HepG2 (cell line): ENCODE measurements at regions of chr14 and their contacts with region 1.

Region 1: GRCh38 chr14:24978862-24979724 is 70.9 kb downstream of the STXBP6 start:
- DNase-seq: peak; percentile 93
- ATAC-seq: peak; percentile 89
- H3K4me3 ChIP-seq: no peak overlapping the region
- H3K27ac ChIP-seq: peak overlapping the region; percentile 31
- H3K4me1 ChIP-seq: peaks cover 58% of the 10 kb centered on the region
- H3K27me3 ChIP-seq: no peaks in the 10 kb centered on the region
- CTCF ChIP-seq: peak; percentile 19; the same call in 1 of the 2 replicates
- EP300 ChIP-seq: peak in 1 of 2 experiments; percentile 86; a peak in 2 of 4 replicates
- POLR2A ChIP-seq: no peak
- RAD21 ChIP-seq: no peak

Region 2: DNA sequence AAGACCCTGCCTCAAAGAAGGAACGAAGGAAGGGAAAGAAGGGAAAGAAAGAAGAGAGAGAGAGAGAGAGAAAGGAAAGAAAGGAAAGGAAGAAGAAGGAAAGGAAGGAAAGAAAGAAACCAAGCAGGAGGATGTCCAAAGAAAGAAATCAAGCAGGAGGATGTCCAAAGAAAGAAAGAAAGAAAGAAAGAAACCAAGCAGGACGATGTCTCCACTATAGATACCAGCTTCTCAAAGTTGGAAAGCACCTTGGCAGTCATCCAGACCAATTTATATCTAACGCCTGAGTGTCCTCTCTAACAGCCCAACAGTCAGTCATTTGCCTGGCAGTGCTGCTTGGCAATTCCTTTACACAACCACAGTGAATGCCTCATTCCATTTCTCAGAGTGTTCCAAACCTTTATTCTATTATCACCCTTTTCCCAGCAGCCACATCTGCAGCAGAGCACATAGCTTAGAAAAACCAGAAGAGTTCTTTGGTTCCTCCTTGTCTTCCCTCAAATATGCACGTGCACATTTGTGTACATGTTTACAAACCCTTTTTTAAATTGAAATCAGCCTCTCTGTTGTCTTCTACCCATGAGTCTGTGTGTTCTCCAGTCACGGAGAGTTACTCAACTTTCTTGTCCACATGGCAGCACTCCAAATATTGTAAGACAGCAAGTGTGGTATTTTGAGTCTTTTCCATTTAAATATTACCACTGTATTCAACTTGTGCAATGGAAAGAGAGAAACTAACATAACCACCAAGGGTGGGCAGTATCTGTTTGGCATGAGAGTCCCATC is 67.6 kb before region 1 on chr14:
- CTCF ChIA-PET with region 1: no interaction called
- POLR2A ChIA-PET with region 1: no interaction called
- in situ Hi-C with region 1: no loop called
- intact Hi-C with region 1: loop called (anchors 2 kb)
- DNase-seq: no peak
- ATAC-seq: no peak
- H3K4me3 ChIP-seq: no peak overlapping the region
- H3K27ac ChIP-seq: no peak overlapping the region
- H3K4me1 ChIP-seq: peaks cover 64% of the 10 kb centered on the region
- H3K27me3 ChIP-seq: no peaks in the 10 kb centered on the region
- CTCF ChIP-seq: no peak
- EP300 ChIP-seq: no peak
- POLR2A ChIP-seq: no peak
- RAD21 ChIP-seq: no peak

Region 3: GRCh38 chr14:24944800-24945199 is 34.3 kb before region 1 on chr14:
- CTCF ChIA-PET with region 1: no interaction called
- POLR2A ChIA-PET with region 1: no interaction called
- in situ Hi-C with region 1: no loop called
- intact Hi-C with region 1: no loop called
- DNase-seq: no peak
- ATAC-seq: no peak
- H3K4me3 ChIP-seq: no peak overlapping the region
- H3K27ac ChIP-seq: no peak overlapping the region
- H3K4me1 ChIP-seq: 0 out of 2 replicates have a peak, but pooled peaks cover 18% of the 10 kb centered on the region
- H3K27me3 ChIP-seq: no peaks in the 10 kb centered on the region
- CTCF ChIP-seq: no peak
- EP300 ChIP-seq: no peak
- POLR2A ChIP-seq: no peak
- RAD21 ChIP-seq: no peak

Region 4: GRCh38 chr14:24965934-24966578 is 13.0 kb before region 1 on chr14:
- CTCF ChIA-PET with region 1: no interaction called
- POLR2A ChIA-PET with region 1: interaction called, 10 read pairs
- in situ Hi-C with region 1: no loop called
- intact Hi-C with region 1: no loop called
- DNase-seq: no peak
- ATAC-seq: peak; percentile 72
- H3K4me3 ChIP-seq: no peak overlapping the region
- H3K27ac ChIP-seq: no peak overlapping the region
- H3K4me1 ChIP-seq: peaks cover 24% of the 10 kb centered on the region
- H3K27me3 ChIP-seq: no peaks in the 10 kb centered on the region
- CTCF ChIP-seq: no peak
- EP300 ChIP-seq: no peak
- POLR2A ChIP-seq: no peak
- RAD21 ChIP-seq: no peak

Region 5: GRCh38 chr14:25004389-25004809 is 25.3 kb after region 1 on chr14:
- CTCF ChIA-PET with region 1: no interaction called
- POLR2A ChIA-PET with region 1: interaction called, 3 read pairs
- in situ Hi-C with region 1: no loop called
- intact Hi-C with region 1: loop called (anchors 2 kb)
- DNase-seq: peak; percentile 65
- ATAC-seq: peak; percentile 64
- H3K4me3 ChIP-seq: no peak overlapping the region; a peak in 1 of 6 replicates
- H3K27ac ChIP-seq: peak overlapping the region; percentile 0
- H3K4me1 ChIP-seq: peaks cover 45% of the 10 kb centered on the region
- H3K27me3 ChIP-seq: no peaks in the 10 kb centered on the region
- CTCF ChIP-seq: no peak
- EP300 ChIP-seq: no peak; a peak in 1 of 4 replicates
- POLR2A ChIP-seq: no peak
- RAD21 ChIP-seq: no peak

Region 6: DNA sequence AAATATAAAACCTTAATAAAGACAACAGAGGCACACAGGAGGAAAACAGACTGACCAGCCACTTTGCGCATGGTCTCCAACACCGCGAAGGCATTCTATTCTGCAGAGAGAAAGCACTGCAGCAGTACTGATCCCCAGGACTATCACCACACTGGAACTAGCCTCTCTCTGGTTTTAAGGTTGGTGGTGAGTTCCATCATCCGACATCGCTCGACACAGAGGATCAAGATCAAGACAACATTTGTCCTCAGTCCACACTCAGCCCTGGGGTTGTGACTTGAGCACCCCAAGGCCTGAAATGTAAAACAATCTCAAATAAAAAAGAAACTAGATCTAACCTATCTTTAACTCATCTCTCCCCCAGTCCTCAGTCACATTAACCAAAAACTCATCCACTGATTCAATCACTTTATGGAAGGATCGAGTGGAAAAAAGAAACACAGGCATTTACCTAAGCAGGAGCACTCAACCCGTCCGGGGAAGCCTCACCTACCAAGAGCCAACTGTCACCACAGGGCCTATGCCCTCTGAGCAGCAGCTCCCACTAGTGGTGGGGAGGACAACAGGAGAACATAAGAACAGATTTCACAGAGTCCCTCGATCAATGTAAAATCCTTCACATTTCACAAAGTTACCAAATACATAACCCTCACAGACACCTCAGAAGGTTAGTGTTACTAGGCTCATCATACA is 53.1 kb after region 1 on chr14:
- CTCF ChIA-PET with region 1: no interaction called
- POLR2A ChIA-PET with region 1: interaction called, 6 read pairs
- in situ Hi-C with region 1: no loop called
- intact Hi-C with region 1: loop called (anchors 5 kb)
- DNase-seq: peak; percentile 84
- ATAC-seq: peak; percentile 82
- H3K4me3 ChIP-seq: peak overlapping the region; percentile 25 to 62 (median 56)
- H3K27ac ChIP-seq: peak overlapping the region; percentile 6
- H3K4me1 ChIP-seq: peaks cover 48% of the 10 kb centered on the region
- H3K27me3 ChIP-seq: no peaks in the 10 kb centered on the region
- CTCF ChIP-seq: peak; percentile 94
- EP300 ChIP-seq: no peak
- POLR2A ChIP-seq: peak; percentile 31 to 46; a peak in 1 of 4 replicates
- RAD21 ChIP-seq: peak; percentile 88

Region 7: DNA sequence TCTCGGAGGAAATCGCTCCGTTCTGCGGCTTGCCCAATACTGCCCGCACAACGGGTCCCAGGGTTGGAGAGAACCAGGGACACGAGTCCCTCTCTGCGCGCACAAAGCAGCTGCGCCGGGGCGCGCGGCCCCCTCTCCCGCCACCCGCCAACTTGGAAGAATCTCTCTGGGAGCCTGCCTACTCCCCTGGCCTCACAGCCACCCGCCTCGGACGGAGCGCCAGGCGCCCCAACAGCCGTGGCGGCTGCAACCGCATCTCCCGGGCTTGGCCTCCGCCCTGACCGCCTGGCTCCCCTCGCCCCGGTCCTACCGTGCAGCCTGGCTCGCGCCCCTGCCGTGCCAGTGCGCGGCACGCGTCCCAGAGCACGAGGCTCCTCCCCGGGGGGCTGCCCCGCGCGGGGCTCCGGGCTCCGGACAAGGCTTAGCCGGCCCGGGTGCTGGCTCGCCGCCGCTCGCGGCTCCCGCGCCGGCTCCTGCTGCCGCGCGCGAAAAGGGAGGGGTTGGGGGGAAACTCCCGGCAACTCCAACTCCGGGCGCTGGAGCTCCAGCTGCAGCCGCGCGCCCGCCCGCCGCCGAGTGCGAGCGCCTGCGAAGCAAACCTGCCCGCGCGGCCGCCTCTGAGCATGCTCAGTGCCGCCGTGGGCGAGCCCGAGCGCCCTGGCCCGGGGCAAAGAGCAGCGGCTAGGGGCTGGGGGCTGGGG is 70.6 kb after region 1 on chr14 and contains the start of gene STXBP6:
- CTCF ChIA-PET with region 1: no interaction called
- POLR2A ChIA-PET with region 1: interaction called, 3 read pairs
- in situ Hi-C with region 1: no loop called
- intact Hi-C with region 1: loop called (anchors 2 kb)
- DNase-seq: peak; percentile 65
- ATAC-seq: peak; percentile 97
- H3K4me3 ChIP-seq: peak within 1 kb of the TSS; percentile 65 to 82 (median 73)
- H3K27ac ChIP-seq: no peak within 1 kb of the TSS
- H3K4me1 ChIP-seq: peaks cover 41% of the 10 kb centered on the region
- H3K27me3 ChIP-seq: peaks cover 0 to 25% of the 10 kb centered on the region in 2 experiments; a peak in 3 of 5 replicates
- CTCF ChIP-seq: peak; percentile 6; the same call in 1 of the 2 replicates
- EP300 ChIP-seq: no peak
- POLR2A ChIP-seq: peak in 1 of 2 experiments; percentile 58; a peak in 1 of 4 replicates
- RAD21 ChIP-seq: 0 out of 2 replicates have a peak, but pooled peaks have one; percentile 68
- total RNA-seq, gene STXBP6: 35.3 and 43.2 TPM in 2 replicates